ENCODE measurements at regions of chr4 and their contacts with region 1.

Region 1: GRCh38 chr4:134001052-134001451 is 200.5 kb downstream of the PABPC4L start:
- DNase-seq: no peak
- ATAC-seq: no peak
- H3K4me3 Mint-ChIP-seq: no peak overlapping the region
- H3K27ac Mint-ChIP-seq: no peak overlapping the region
- H3K4me1 Mint-ChIP-seq: no peaks in the 10 kb centered on the region
- H3K27me3 Mint-ChIP-seq: no peaks in the 10 kb centered on the region
- CTCF ChIP-seq: no peak

Region 2: DNA sequence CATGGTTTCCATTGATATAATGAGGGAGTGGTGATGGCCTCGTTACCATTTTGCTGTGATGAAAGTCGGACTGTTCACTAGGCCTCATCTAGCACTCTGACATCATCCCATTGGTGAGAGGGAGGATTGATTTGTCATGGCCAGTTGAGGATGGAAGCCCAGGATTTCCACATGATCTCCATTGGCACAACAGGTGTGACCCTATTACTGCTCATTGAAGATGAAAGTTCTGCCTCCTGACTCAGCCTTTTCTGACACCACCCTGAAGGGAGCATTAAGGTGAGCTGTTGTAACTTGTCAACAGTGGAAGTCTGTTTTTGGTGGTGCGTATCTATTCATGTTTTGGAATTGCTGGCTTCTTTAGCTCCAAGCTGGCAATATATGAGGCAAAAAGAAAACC is 56.3 kb after region 1 on chr4:
- CTCF ChIA-PET with region 1: no interaction called
- POLR2A ChIA-PET with region 1: no interaction called
- intact Hi-C with region 1: loop called (anchors 1 kb)
- DNase-seq: no peak
- ATAC-seq: no peak
- H3K4me3 Mint-ChIP-seq: no peak overlapping the region
- H3K27ac Mint-ChIP-seq: no peak overlapping the region
- H3K4me1 Mint-ChIP-seq: no peaks in the 10 kb centered on the region
- H3K27me3 Mint-ChIP-seq: no peaks in the 10 kb centered on the region
- CTCF ChIP-seq: no peak

Measured in activated B cell treated with CpG ODN at 0.5 μM for 24 hours (primary cell).